Posterior vena cava (tissue), 2 donors: ENCODE measurements at regions of chr15 and their contacts with region 1.

Region 1: DNA sequence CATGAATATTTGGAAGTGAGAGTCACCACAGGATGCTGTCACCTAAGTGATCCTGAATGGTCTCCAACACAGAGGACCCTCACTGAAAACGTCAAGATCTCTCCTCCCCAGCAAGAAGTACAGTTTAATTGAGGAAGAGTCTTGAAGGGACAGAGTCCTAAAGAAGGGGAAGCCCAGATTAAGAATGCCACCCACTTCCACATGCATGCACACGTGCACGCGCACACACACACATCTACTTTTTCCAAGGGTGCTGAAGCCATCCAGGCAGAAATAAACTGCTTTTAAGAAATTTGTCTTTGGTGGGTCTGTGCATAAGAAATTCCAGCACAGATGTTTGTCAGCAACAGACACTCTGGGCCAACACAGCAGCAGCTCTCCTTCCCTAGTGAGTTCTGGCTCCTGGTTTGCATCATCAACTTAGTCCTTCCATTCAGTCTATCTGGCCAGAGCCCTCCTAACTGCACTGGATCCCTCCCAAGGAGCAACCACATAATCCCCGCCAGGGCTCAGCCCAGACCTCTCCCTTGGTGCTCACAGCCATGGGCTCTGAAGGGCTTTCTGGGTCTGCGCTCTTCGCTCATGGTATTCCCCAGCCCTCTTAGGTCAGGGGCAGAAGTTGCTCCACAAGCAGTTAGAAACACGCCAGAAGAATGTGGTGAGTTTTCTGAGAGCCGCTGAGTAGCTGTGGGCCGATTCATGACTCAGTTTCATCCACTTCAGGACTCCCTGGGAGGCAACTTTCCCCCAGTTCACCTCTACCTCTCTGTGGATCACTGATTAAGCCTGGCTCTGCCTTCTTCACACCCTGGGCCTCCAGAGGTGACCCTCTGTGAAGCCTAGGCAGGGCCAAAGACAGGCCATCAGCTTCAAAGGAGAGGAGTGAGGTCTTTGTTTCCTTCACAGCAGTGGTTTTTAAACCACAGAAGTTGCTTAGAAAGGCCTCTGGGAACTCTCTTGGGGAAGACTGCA is 132.6 kb upstream of the LIPC start:
- DNase-seq: no peak

Region 2: DNA sequence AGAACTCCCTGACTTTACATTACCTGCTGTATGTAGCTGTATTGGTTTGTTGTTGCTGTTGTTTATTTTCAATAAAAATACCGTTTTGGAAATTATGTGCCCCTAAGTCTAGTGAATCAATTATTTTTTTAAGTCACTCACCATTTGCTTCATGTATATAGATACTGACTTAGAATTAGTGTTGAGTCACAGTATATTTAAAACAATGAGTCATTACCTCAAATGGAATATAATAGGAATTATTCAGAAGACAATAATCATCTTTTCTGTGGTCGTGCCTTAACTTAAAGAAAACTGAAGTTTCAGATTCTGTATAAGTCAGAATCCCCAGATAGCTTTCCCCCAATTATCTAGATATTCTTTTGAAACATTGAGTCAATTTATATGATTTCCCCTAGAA is 212.7 kb before region 1 on chr15:
- intact Hi-C with region 1: no loop called
- DNase-seq: no peak

Region 3: GRCh38 chr15:58246041-58246440 is 53.1 kb before region 1 on chr15:
- intact Hi-C with region 1: loop called in 1 of 2 experiments (anchors 1 kb)
- DNase-seq: no peak

Region 4: DNA sequence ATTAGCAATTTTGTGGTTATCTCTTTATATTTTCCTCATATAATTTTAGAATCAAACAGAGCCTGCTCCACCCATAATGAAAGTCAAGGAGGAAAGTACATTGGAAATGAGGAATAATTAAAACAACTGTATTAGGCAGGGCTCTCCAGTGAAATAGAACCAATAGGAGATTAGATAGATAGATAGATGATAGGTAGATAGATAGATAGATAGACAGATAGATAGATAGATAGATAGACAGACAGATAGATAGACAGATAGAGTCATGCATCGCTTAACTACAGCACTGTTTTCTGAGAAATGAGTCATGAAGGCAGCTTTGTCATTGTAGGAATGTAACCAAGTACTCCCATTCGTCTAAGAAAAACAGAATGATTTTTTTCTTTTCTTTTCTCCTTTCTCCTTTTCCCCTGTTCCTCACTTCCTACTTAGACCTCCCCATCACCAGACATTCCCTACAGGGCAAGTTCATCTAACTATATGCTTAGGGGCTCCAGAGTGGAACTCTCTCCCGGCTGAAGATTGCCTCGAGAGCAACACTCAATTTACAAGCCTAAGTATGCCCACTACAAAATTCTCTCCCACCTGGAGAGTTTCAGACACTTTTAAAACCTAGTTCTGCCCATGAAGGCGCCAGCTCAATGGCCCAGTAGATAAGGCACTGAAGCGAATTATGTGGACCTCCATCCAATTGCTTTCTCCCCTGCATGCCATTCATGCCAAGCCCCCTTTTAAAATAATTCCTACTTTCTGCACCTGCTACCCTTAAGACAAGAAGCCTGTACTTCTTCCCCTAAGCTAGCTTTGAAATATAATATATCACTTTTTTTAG is 79.3 kb after region 1 on chr15:
- intact Hi-C with region 1: loop called in 1 of 2 experiments (anchors 10 kb)
- DNase-seq: no peak